ENCODE measurements at regions of chr1 and their contacts with region 1.

Region 1: DNA sequence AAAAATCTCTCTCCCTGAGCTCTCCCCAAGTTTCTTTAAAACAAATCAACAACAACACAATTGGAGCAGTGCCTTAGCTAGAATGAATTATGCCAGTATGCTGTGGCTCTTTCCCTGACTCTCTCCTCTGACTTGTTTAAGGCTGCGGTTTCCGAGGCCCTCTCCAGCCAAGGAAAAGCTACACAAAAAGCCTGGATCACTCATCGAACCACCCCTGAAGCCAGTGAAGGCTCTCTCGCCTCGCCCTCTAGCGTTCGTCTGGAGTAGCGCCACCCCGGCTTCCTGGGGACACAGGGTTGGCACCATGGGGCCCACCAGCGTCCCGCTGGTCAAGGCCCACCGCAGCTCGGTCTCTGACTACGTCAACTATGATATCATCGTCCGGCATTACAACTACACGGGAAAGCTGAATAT is 1.9 kb downstream of the S1PR1 start:
- DNase-seq: peak; percentile 90
- H3K4me3 Mint-ChIP-seq: peak overlapping the region; percentile 98
- H3K27ac Mint-ChIP-seq: peak overlapping the region; percentile 99
- H3K4me1 Mint-ChIP-seq: peaks cover 54% of the 10 kb centered on the region
- H3K27me3 Mint-ChIP-seq: no peaks in the 10 kb centered on the region

Region 2: GRCh38 chr1:101178688-101179491 is 59.8 kb before region 1 on chr1:
- CTCF ChIA-PET with region 1: interaction called, 4 read pairs
- POLR2A ChIA-PET with region 1: interaction called, 20 read pairs
- DNase-seq: peak; percentile 61
- H3K4me3 Mint-ChIP-seq: peak overlapping the region; percentile 86
- H3K27ac Mint-ChIP-seq: peak overlapping the region; percentile 98
- H3K4me1 Mint-ChIP-seq: peaks cover 80% of the 10 kb centered on the region
- H3K27me3 Mint-ChIP-seq: no peaks in the 10 kb centered on the region

Region 3: DNA sequence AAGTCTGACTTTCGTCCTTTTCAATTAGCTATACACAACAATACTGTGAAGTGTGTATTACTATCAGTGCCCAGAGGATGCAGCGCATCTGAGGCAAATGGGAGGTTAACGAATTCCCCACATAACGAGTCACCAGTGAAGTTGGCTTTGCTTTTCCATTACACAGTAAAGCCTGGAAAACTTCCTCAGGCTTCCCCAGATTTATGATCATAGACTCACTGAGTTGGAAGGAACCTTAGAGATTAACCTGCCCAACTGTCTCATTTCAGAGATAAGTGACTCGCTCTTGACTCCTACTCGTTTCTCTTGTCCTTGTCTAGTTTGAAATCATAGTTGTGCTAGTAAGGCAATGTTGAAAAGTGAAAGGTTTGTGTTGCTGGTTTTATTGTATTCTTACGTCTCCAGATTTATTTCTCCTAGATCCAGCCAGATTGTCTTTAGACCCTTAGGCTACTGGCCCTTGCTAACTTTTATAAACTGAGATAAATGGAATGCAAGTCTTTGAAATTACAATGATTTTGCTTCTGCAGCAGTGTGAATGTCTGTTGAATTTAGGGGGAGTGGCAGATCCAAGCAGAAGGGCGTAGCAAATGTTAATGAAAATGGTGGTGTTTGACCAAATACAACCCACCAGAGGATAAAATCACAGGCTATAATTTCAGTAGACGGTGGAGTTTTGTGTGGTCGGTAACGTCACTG is 15.4 kb after region 1 on chr1:
- CTCF ChIA-PET with region 1: interaction called, 51 read pairs
- POLR2A ChIA-PET with region 1: no interaction called
- DNase-seq: no peak
- H3K4me3 Mint-ChIP-seq: no peak overlapping the region
- H3K27ac Mint-ChIP-seq: no peak overlapping the region
- H3K4me1 Mint-ChIP-seq: peaks cover 40% of the 10 kb centered on the region
- H3K27me3 Mint-ChIP-seq: peaks cover under 1% of the 10 kb centered on the region

Region 4: GRCh38 chr1:101278845-101279244 is 40.2 kb after region 1 on chr1:
- CTCF ChIA-PET with region 1: interaction called, 15 read pairs
- POLR2A ChIA-PET with region 1: interaction called, 4 read pairs
- DNase-seq: peak; percentile 37
- H3K4me3 Mint-ChIP-seq: peak overlapping the region; percentile 62
- H3K27ac Mint-ChIP-seq: peak overlapping the region; percentile 83
- H3K4me1 Mint-ChIP-seq: peaks cover 87% of the 10 kb centered on the region
- H3K27me3 Mint-ChIP-seq: peaks cover 2% of the 10 kb centered on the region